WTC11 (cell line): ENCODE measurements at regions of chr9 and their contacts with region 1.

Region 1: GRCh38 chr9:7402334-7403027 is 397.1 kb downstream of the DMAC1 start:
- DNase-seq: no peak
- ATAC-seq: peak; percentile 65
- H3K4me3 Mint-ChIP-seq: peak overlapping the region; percentile 17; the same call in 1 of the 2 replicates
- H3K27ac Mint-ChIP-seq: peak overlapping the region; percentile 57
- H3K4me1 Mint-ChIP-seq: peaks cover 58% of the 10 kb centered on the region
- H3K27me3 Mint-ChIP-seq: no peaks in the 10 kb centered on the region
- CTCF ChIP-seq: no peak

Region 2: DNA sequence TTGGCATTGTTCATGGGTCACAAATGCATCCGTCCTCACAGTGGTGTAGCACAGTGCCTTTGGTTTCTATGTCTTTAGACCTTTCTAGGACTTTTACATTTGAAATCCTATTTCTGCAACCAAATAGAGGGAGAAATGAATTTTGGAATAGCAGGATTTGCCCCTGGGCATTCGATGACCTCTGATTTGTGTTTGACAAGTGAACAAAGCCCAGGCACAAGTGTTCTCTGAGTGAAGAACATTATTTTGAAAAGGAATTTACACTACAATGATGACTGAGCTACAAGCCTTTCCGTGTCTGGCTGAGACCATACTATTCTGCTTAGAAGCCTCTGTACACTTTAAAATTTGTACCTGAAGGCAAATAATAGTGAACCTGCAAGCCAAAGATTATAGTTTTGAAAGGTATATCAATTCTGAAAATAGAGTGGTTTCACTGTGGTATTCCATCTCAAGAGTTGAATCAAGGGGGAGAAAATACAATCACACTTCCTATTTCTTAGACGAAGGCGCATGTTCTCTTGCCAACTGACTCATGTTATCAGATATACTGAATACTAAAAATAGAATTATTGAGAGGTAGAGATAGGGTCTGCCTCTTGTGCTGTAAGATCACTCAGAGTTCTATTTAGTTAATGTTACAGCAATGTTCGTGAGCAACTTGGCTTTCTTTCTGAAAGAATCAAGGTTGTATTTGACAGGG is 347.1 kb before region 1 on chr9:
- CTCF ChIA-PET with region 1: interaction called, 14 read pairs
- POLR2A ChIA-PET with region 1: no interaction called
- DNase-seq: no peak
- ATAC-seq: no peak
- H3K4me3 Mint-ChIP-seq: no peak overlapping the region
- H3K27ac Mint-ChIP-seq: no peak overlapping the region
- H3K4me1 Mint-ChIP-seq: peaks cover 31% of the 10 kb centered on the region
- H3K27me3 Mint-ChIP-seq: no peaks in the 10 kb centered on the region
- CTCF ChIP-seq: no peak

Region 3: GRCh38 chr9:7216004-7216831 is 186.3 kb before region 1 on chr9:
- CTCF ChIA-PET with region 1: no interaction called
- POLR2A ChIA-PET with region 1: no interaction called
- DNase-seq: no peak
- ATAC-seq: no peak
- H3K4me3 Mint-ChIP-seq: no peak overlapping the region
- H3K27ac Mint-ChIP-seq: no peak overlapping the region
- H3K4me1 Mint-ChIP-seq: peaks cover 17% of the 10 kb centered on the region
- H3K27me3 Mint-ChIP-seq: peaks cover 48% of the 10 kb centered on the region
- CTCF ChIP-seq: no peak

Region 4: DNA sequence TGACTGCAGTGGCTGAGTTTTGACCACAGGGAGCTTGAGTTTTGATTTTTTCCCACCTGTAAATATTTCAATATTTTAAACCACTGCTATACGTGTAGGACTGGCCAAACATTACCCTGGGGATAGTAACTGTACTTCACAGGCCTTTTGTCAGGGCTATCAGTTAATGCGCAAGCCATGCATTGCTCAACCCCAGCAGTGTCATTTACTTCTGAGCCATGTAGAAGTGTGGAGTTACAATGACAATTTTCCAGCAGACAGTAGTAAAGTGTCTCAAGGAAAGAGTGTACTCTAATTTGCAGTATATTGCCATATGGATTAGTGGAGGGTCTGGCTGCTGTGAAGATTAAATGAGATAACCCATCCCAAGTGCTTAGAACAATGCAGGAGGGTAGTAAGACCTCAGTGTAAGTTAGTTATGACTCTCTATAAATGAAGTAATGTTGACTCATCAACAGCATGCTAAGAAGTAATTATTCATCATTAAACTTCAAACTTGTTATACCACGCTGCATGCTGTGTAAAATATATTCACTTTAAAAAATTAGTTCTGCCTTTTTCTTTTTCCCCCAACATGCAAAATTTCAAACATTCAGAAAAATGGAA is 155.5 kb before region 1 on chr9:
- CTCF ChIA-PET with region 1: no interaction called
- POLR2A ChIA-PET with region 1: no interaction called
- DNase-seq: no peak
- ATAC-seq: no peak
- H3K4me3 Mint-ChIP-seq: no peak overlapping the region
- H3K27ac Mint-ChIP-seq: no peak overlapping the region
- H3K4me1 Mint-ChIP-seq: peaks cover 29% of the 10 kb centered on the region
- H3K27me3 Mint-ChIP-seq: peaks cover 11% of the 10 kb centered on the region; the same call in 1 of the 2 replicates
- CTCF ChIP-seq: no peak

Region 5: DNA sequence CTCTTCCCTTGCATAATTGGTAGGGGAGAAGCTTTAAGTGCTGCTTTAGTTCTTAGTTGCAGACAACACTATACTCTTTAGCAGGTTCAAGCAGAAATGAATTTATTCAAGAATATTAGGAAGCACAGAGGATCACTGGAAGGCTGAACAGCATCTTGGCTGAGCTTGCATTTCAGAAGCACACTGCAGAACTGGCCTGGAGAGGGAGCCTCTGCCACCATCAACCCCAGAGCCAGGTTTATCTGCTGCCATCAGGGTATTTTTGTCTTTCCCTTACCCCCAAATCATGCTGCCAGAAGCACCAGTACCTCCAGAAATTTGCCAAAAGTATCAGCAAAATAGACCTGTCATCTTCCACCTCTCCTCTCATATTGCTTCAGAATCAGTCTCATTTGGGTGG is 43.6 kb before region 1 on chr9:
- CTCF ChIA-PET with region 1: interaction called, 13 read pairs
- POLR2A ChIA-PET with region 1: no interaction called
- DNase-seq: peak; percentile 14
- ATAC-seq: peak; percentile 75
- H3K4me3 Mint-ChIP-seq: no peak overlapping the region
- H3K27ac Mint-ChIP-seq: no peak overlapping the region
- H3K4me1 Mint-ChIP-seq: peaks cover 8% of the 10 kb centered on the region
- H3K27me3 Mint-ChIP-seq: no peaks in the 10 kb centered on the region
- CTCF ChIP-seq: no peak

Region 6: GRCh38 chr9:7375013-7375511 is 27.4 kb before region 1 on chr9:
- CTCF ChIA-PET with region 1: no interaction called
- POLR2A ChIA-PET with region 1: no interaction called
- DNase-seq: no peak
- ATAC-seq: no peak
- H3K4me3 Mint-ChIP-seq: no peak overlapping the region
- H3K27ac Mint-ChIP-seq: no peak overlapping the region
- H3K4me1 Mint-ChIP-seq: peaks cover 2% of the 10 kb centered on the region
- H3K27me3 Mint-ChIP-seq: no peaks in the 10 kb centered on the region
- CTCF ChIP-seq: no peak

Region 7: GRCh38 chr9:7479300-7479699 is 76.8 kb after region 1 on chr9:
- CTCF ChIA-PET with region 1: interaction called, 10 read pairs
- POLR2A ChIA-PET with region 1: no interaction called
- DNase-seq: no peak
- ATAC-seq: peak; percentile 39; the same call in 1 of the 2 replicates
- H3K4me3 Mint-ChIP-seq: no peak overlapping the region
- H3K27ac Mint-ChIP-seq: no peak overlapping the region
- H3K4me1 Mint-ChIP-seq: no peaks in the 10 kb centered on the region
- H3K27me3 Mint-ChIP-seq: no peaks in the 10 kb centered on the region
- CTCF ChIP-seq: 0 out of 2 replicates have a peak, but pooled peaks have one; percentile 13

Region 8: DNA sequence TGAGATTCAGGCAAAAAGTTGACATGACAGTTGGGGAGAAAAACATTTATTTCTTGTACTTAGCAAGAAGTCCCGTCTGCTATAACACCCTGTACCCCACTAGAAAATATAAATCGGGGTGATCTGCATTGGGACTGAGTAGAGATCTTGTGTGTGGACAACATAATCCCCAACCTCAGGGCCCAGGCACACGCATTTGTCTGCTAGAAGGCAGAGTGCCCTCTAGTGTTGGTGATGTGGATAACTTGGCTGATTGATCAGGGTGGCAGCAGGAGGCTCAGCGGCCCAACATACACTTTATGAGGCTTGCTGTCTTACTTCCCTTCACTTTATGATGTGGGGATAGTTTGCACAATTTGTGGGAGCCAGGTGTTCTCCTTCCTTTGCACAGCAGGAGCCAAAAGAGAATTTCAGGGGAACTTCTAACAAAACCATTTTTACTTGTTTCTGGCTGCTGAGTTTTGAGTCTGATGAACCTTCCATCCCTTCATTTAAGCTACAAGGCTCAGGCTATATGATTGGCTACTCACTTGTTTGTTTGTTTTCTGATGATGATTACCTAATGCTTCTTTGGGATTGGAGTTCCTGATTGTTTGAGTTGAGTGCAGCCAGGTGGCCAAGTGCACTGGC is 133.9 kb after region 1 on chr9:
- CTCF ChIA-PET with region 1: interaction called, 13 read pairs
- POLR2A ChIA-PET with region 1: no interaction called
- DNase-seq: peak; percentile 64
- ATAC-seq: peak; percentile 98
- H3K4me3 Mint-ChIP-seq: no peak overlapping the region
- H3K27ac Mint-ChIP-seq: no peak overlapping the region
- H3K4me1 Mint-ChIP-seq: peaks cover 5% of the 10 kb centered on the region
- H3K27me3 Mint-ChIP-seq: no peaks in the 10 kb centered on the region
- CTCF ChIP-seq: peak; percentile 53

Region 9: GRCh38 chr9:7656636-7657035 is 254.2 kb after region 1 on chr9:
- CTCF ChIA-PET with region 1: interaction called, 16 read pairs
- POLR2A ChIA-PET with region 1: no interaction called
- DNase-seq: no peak
- ATAC-seq: no peak
- H3K4me3 Mint-ChIP-seq: no peak overlapping the region
- H3K27ac Mint-ChIP-seq: no peak overlapping the region
- H3K4me1 Mint-ChIP-seq: no peaks in the 10 kb centered on the region
- H3K27me3 Mint-ChIP-seq: no peaks in the 10 kb centered on the region
- CTCF ChIP-seq: no peak